ENCODE measurements at regions of chr9 and their contacts with region 1.

Region 1: DNA sequence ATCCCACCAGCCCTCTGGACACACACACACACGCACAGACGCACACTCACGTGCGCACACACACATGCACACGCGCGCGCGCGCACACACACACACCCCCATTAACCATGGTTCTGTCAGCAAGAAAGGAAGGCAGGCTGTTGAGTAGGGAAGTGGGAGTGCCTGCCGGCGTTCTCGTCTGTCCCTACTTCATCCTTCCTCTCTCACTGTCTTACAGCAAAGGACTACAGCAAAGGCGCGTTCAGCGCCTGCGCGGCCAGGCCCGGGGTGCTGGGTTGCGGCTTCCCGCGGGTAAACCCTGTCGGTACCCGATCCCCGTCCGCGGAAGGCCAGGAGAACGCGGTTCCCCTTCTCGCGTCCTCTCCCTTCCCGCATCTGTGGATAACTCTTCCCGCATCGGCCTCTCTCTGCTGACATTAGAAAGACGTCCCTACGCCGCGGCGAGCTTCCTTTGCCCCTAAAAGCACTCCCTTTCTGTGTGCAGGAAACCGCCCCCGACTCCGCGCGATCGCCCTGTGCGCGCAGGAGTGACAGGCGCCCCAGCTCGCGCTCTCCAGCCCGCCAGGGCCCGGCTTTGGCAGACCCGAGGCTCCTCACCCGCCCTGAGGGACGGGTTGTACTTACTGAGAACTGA is 219.2 kb downstream of the AGTPBP1 start:
- DNase-seq: peak in 9 of 10 donors; percentile 43 to 96 (median 68)

Region 2: DNA sequence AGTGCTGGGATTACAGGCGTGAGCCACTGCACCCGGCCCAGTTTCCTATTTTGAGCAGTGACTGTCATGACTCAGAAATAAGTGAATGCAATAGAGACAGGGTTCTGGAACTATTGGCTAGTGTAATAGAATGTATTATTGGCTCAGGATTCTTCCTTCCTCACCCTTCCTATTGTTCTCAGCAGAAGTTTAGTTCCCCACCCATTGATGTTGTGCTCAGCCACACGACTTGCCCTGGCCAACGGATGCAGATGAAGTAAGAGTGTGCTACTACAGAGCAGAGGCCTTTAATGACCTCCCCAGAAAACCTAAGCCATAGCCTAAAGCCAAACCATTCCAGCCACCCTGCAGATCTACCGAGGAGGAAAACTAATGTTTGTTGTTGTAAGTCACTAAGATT is 68.7 kb before region 1 on chr9:
- intact Hi-C with region 1: no loop called
- DNase-seq: no peak

Region 3: GRCh38 chr9:85569988-85570387 is 47.4 kb after region 1 on chr9:
- intact Hi-C with region 1: no loop called
- DNase-seq: no peak

Region 4: DNA sequence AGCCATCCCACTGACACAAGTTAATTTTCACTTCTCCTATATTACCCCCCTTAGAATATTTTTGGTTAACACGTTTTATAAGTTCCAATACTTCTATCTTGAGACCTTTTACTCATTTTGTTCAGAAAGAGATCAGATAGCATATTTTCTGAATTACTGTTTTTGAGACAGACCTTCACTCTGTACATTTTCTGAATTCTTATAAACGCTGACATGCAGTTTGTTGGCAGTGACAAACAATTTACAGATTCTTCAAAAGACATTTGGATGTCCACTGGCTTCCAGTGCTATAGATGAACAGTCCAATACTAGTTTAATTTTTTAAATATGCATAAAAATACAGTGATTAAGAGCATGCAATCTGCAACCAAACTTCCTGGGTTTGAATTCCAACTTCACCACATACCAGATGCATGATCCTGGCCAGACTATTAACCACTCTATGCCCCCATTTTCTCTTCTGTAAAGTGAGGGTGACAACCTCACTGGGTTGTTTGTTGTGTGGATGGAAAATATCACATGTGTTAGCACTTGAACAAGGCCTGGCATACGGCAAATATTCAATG is 77.0 kb after region 1 on chr9:
- intact Hi-C with region 1: loop called (anchors 5 kb)
- DNase-seq: no peak

Region 5: GRCh38 chr9:86604741-86605140 is 1082.2 kb after region 1 on chr9:
- intact Hi-C with region 1: no loop called
- DNase-seq: no peak